Sigmoid colon (tissue), 7 donors: ENCODE measurements at regions of chr19 and their contacts with region 1.

Region 1: DNA sequence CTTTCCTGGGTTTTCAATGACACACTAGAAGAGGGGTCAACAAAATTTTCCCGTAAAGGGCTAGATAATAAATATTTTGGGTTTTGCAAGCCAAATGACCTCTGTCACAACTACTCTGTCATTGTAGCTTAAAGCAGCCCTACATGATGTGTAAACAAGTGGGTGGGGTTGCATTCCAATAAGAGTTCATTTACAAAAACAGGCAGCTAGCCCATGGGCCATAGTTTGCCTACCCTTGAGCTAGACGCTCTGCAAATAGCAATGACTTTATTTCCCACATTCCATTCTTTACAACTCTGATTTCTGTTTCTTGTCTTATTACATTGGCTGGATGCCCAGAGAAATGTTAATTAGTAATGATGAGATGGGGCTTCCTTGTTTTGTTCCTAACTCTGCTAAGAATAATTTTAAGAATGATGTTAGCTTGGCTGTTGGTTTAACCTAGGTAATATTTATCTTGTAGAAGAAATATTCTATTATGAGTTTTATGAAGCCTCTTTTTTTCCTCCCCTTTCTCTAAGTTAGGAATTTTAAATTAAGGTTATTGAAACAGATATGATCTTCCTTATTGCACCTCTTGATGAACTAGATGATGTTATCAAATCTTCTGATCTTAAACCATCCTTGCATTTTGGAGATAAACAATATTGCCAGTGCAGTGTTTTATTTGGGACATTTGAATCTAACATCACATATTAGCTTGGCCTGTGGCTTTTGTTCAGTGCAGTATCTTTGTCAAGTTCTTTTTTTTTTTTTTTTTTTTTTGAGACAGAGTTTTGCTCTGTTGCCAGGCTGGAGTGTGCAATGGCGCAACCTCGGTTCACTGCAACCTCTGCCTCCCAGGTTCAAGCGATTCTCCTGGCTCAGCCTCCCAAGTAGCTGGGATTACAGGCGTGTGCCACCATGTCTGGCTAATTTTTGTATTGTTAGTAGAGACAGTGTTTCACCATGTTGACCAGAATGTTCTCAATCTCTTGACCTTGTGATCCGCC is 76.3 kb downstream of the ZNF557 start:
- DNase-seq: peak; percentile 26
- H3K4me3 ChIP-seq: no peak overlapping the region
- H3K27ac ChIP-seq: no peak overlapping the region
- H3K4me1 ChIP-seq: no peaks in the 10 kb centered on the region
- H3K27me3 ChIP-seq: no peaks in the 10 kb centered on the region
- CTCF ChIP-seq: no peak
- EP300 ChIP-seq: no peak
- POLR2A ChIP-seq: no peak

Region 2: GRCh38 chr19:7104747-7105447 is 40.9 kb before region 1 on chr19:
- intact Hi-C with region 1: loop called (anchors 5 kb)
- DNase-seq: no peak
- H3K4me3 ChIP-seq: no peak overlapping the region
- H3K27ac ChIP-seq: no peak overlapping the region
- H3K4me1 ChIP-seq: peaks cover 0 to 9% (median 8%) of the 10 kb centered on the region in 4 donors
- H3K27me3 ChIP-seq: no peaks in the 10 kb centered on the region
- CTCF ChIP-seq: no peak
- EP300 ChIP-seq: no peak
- POLR2A ChIP-seq: no peak

Region 3: GRCh38 chr19:7125221-7125620 is 20.6 kb before region 1 on chr19:
- intact Hi-C with region 1: no loop called
- DNase-seq: peak; percentile 52
- H3K4me3 ChIP-seq: no peak overlapping the region
- H3K27ac ChIP-seq: no peak overlapping the region
- H3K4me1 ChIP-seq: no peaks in the 10 kb centered on the region
- H3K27me3 ChIP-seq: no peaks in the 10 kb centered on the region
- CTCF ChIP-seq: no peak
- EP300 ChIP-seq: no peak
- POLR2A ChIP-seq: no peak

Region 4: DNA sequence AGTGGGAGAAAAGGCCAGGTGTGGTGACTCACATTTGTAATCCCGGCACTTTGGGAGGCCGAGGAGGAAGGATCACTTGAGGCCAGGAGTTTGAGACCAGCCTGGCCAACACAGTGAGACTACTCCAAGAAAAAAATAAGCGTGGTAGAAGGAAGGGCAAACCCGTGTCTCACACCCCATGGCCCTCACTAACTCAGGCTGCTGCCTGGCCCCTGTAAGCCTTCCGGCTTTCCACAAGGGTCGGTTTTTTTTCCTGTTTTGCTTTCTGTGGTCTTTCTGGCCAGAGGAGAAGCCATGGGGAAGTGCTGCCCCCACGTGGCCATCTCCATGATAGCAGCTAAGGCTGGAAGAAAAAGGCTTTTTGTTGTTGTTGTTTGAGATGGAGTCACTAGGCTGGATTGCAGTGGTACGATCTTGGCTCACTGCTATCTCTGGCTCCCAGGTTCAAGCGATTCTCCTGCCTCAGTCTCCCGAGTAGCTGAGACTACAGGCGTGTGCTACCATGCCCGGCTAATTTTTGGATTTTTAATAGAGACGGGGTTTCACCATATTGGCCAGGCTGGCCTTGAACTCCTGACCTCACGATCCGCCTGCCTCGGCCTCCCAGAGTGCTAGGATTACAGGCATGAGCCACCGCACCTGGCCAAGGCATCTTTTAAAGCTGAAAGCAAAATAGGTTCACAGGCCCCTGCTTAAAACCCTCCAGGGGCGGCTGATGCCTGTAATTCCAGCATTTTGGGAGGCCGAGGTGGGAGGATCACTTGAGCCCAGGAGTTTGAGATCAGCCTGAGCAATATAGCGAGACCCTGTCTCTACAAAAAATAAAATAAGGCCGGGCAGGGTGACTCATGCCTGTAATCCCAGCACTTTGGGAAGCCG is 195.4 kb after region 1 on chr19:
- intact Hi-C with region 1: loop called (anchors 1 kb)
- DNase-seq: peak; percentile 89
- H3K4me3 ChIP-seq: no peak overlapping the region
- H3K27ac ChIP-seq: no peak overlapping the region
- H3K4me1 ChIP-seq: peaks cover 0 to 8% (median 0%) of the 10 kb centered on the region in 4 donors
- H3K27me3 ChIP-seq: no peaks in the 10 kb centered on the region
- CTCF ChIP-seq: peak; percentile 91 to 94 (median 94)
- EP300 ChIP-seq: no peak
- POLR2A ChIP-seq: no peak